ENCODE measurements at regions of chr11 and their contacts with region 1.

Region 1: DNA sequence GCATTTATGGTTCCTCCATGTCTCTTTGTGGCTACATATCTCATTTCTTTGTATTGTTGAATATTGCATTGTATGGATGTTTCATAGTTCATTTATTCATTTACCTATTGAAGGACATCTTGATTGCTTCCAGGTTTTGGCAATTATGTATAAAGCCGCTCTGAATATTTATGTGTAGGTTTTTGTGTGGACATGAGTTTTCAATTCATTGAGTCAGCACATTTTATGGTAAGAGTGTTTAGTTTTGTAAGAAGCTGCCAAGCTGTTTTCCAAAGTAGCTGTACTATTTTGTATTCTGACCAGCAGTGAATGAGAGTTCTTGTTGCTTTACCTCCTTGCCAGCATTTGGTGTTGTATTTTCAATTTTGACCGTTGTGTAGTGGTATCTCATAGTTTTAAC is 39.2 kb downstream of the KDM2A start:
- DNase-seq: no peak
- H3K4me3 ChIP-seq: no peak overlapping the region
- H3K27ac ChIP-seq: no peak overlapping the region
- H3K4me1 ChIP-seq: no peaks in the 10 kb centered on the region
- H3K27me3 ChIP-seq: no peaks in the 10 kb centered on the region

Region 2: DNA sequence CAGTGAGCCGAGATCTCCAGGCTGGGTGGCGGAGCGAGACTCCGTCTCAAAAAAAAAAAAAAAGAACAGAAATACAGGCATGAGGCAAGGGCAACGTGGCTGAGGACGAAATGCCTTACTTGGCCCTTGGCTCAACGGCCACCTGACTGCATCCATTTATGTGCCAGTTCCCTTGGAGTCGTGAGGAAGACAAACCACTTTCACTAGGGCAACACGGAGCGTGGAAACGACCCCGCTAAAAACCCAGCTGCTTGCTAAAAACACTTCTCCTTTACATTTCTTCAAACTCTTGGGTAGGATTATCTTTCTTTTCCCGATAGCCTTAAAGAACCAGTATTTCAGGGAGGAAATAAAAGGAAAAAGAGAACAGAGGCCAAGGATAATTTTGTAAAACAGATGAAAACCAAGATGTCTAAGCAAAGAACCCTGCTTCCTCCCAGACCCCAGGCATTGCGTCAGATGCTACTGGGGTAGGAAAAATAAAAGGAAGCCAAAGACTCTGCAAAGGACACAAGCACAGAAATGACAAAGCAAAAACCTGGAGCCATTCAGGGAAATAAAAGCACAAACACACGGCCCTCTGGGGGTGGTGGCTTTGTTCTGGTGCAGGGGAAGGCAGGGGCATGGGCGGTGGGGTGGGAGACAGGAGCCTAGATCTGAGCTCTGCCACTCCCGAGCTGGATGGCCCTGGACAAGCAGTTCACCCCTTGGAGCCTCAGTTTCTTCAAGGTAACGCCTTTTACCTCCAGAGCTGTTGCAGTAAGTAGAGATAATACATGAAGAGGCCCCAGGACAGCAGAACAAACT is 237.0 kb before region 1 on chr11:
- CTCF ChIA-PET with region 1: no interaction called
- POLR2A ChIA-PET with region 1: no interaction called
- DNase-seq: peak; percentile 36 to 69 (median 66)
- H3K4me3 ChIP-seq: no peak overlapping the region
- H3K27ac ChIP-seq: peak overlapping the region in 1 of 2 experiments; percentile 61
- H3K4me1 ChIP-seq: peaks cover 0 to 17% (median 9%) of the 10 kb centered on the region in 4 experiments
- H3K27me3 ChIP-seq: no peaks in the 10 kb centered on the region

Region 3: DNA sequence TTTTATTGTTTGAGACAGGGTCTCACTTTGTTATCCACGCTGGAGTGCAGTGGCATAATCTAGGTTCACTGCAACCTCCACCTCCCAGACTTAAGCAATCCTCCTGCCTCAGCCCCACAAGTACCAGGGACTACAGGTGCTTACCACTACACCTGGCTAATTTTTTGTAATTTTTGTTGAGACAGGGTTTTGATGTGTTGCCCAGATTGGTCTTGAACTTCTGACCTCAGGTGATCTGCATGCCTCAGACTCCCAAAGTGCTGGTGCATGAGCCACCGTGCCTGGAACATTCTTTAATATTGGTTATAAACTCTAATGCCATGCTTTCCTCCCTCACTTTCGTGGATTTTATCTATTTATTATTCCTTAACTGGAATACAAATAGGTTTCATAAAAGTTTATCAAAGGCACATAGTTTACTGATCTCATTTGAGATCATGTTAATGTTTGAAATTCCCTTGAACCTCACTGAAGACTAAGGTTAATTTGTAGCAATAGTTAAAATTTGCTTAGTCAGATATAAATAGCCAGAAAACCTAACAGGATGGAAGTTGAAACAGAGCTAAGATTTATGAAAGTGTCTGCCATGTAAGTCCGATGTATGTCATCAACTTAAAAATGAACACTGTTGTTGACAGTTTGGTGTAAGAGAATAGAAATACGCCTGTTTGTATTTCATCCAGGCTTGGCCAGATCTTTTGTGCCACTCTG is 11.6 kb before region 1 on chr11:
- CTCF ChIA-PET with region 1: interaction called, 10 read pairs
- POLR2A ChIA-PET with region 1: no interaction called
- DNase-seq: no peak
- H3K4me3 ChIP-seq: no peak overlapping the region
- H3K27ac ChIP-seq: no peak overlapping the region
- H3K4me1 ChIP-seq: peaks cover 0 to 3% (median 0%) of the 10 kb centered on the region in 4 experiments
- H3K27me3 ChIP-seq: no peaks in the 10 kb centered on the region

Region 4: DNA sequence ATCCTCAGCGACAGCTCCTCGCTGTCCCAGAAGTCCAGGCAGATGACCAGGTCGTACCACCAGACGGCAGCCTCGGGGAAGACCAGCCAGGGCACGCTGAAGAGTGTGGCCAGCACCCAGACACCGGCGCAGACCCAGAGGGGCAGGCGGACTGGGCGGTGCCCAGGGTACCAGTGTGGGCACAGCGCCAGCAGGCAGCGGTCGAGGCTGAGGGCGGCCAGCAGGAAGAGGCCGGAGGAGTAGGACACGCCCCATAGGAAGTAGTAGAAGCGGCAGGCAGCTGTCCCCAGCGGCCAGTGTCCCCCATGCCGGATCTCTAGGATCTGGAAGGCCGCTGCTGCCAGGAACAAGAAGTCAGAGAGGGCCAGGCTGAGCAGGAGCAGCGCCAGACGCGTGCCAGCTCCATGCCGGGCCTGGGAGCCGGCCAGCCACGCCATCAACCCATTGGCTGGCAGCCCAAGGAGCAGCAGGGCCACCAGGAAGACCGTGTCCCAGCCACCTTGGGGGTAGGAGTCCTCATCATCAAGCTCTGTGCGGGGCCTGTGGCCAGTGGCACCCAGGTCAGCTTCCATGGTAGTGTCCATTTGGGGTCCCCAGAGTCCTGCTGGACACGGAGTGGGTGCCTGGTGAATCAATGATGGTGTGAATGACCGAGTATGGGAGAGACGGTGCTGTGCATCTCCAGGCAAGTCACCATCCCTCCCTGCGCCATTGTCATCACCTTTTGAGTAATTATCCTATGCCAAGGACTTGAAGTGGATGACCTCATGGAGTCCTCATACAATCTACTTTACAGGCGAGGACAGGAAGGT is 294.1 kb after region 1 on chr11 and contains the start of gene GPR152:
- CTCF ChIA-PET with region 1: no interaction called
- POLR2A ChIA-PET with region 1: no interaction called
- DNase-seq: no peak
- H3K4me3 ChIP-seq: no peak within 1 kb of the TSS
- H3K27ac ChIP-seq: no peak within 1 kb of the TSS
- H3K4me1 ChIP-seq: peaks cover 0 to 23% (median 18%) of the 10 kb centered on the region in 4 experiments
- H3K27me3 ChIP-seq: no peaks in the 10 kb centered on the region

Measured in common myeloid progenitor, CD34-positive (primary cell).